ENCODE measurements at regions of chr7 and their contacts with region 1.

Region 1: GRCh38 chr7:123748734-123749536 is at the start of gene WASL:
- DNase-seq: peak; percentile 87 to 91 (median 88)
- H3K4me3 ChIP-seq: peak within 1 kb of the TSS; percentile 68 to 85
- H3K4me3 Mint-ChIP-seq: peak within 1 kb of the TSS; percentile 91 to 98 (median 94)
- H3K27ac ChIP-seq: peak within 1 kb of the TSS; percentile 84
- H3K27ac Mint-ChIP-seq: peak within 1 kb of the TSS; percentile 94 to 97 (median 96)
- H3K4me1 ChIP-seq: peaks cover 52% of the 10 kb centered on the region
- H3K4me1 Mint-ChIP-seq: peaks cover 41 to 56% (median 51%) of the 10 kb centered on the region in 4 donors
- H3K27me3 ChIP-seq: no peaks in the 10 kb centered on the region
- H3K27me3 Mint-ChIP-seq: no peaks in the 10 kb centered on the region
- total RNA-seq, gene WASL: 12.7 to 13.5 TPM

Region 2: GRCh38 chr7:123534383-123535260 is 214.3 kb before region 1 on chr7 and contains the start of gene IQUB:
- CTCF ChIA-PET with region 1: interaction called, 3 read pairs
- POLR2A ChIA-PET with region 1: interaction called, 16 read pairs
- intact Hi-C with region 1: loop called (anchors 2 kb)
- DNase-seq: peak; percentile 89 to 93 (median 91)
- H3K4me3 ChIP-seq: peak within 1 kb of the TSS; percentile 73 to 79
- H3K4me3 Mint-ChIP-seq: peak within 1 kb of the TSS; percentile 73 to 95 (median 90)
- H3K27ac ChIP-seq: peak within 1 kb of the TSS; percentile 60
- H3K27ac Mint-ChIP-seq: peak within 1 kb of the TSS; percentile 72 to 96 (median 91)
- H3K4me1 ChIP-seq: peaks cover 26% of the 10 kb centered on the region
- H3K4me1 Mint-ChIP-seq: peaks cover 11 to 29% (median 25%) of the 10 kb centered on the region in 4 donors
- H3K27me3 ChIP-seq: peaks cover 6% of the 10 kb centered on the region
- H3K27me3 Mint-ChIP-seq: peaks cover 6 to 10% of the 10 kb centered on the region in 2 donors
- total RNA-seq, gene IQUB: 0.14 to 0.49 TPM

Region 3: GRCh38 chr7:123557398-123558288 is 191.3 kb before region 1 on chr7 and contains the start of gene NDUFA5:
- CTCF ChIA-PET with region 1: interaction called, 8 read pairs
- POLR2A ChIA-PET with region 1: interaction called, 37 read pairs
- intact Hi-C with region 1: loop called (anchors 1 kb)
- DNase-seq: peak; percentile 97 to 99 (median 98)
- H3K4me3 ChIP-seq: peak within 1 kb of the TSS; percentile 61 to 78
- H3K4me3 Mint-ChIP-seq: no peak within 1 kb of the TSS
- H3K27ac ChIP-seq: peak within 1 kb of the TSS; percentile 78
- H3K27ac Mint-ChIP-seq: peak within 1 kb of the TSS in 1 of 7 donors; percentile 45
- H3K4me1 ChIP-seq: peaks cover 43% of the 10 kb centered on the region
- H3K4me1 Mint-ChIP-seq: peaks cover 6 to 17% (median 9%) of the 10 kb centered on the region in 4 donors
- H3K27me3 ChIP-seq: no peaks in the 10 kb centered on the region
- H3K27me3 Mint-ChIP-seq: no peaks in the 10 kb centered on the region
- total RNA-seq, gene NDUFA5: 62.7 to 64.6 TPM

Region 4: DNA sequence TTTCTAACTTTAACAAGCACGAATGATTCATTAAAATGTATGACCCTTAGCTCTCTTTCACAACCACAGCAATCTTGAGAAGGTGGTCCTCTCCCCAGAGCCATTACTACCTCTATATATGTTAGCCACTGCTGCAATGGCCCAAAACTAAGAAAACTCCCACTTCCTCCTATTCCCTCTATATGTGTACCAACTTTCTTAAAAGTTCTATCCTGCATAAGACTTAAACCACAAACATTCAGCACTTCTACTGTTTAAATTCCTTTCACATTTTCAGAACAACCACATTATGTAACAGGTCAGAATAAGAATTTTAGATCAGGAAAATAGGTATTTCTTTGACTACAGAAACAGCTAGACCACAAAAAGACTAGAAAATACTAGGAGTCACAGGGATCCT is 36.3 kb before region 1 on chr7:
- CTCF ChIA-PET with region 1: no interaction called
- POLR2A ChIA-PET with region 1: interaction called, 3 read pairs
- intact Hi-C with region 1: loop called (anchors 5 kb)
- DNase-seq: no peak
- H3K4me3 ChIP-seq: no peak overlapping the region
- H3K4me3 Mint-ChIP-seq: peak overlapping the region in 5 of 8 donors; percentile 0 to 68 (median 29)
- H3K27ac ChIP-seq: no peak overlapping the region
- H3K27ac Mint-ChIP-seq: peak overlapping the region in 3 of 7 donors; percentile 1 to 41 (median 3)
- H3K4me1 ChIP-seq: peaks cover 37% of the 10 kb centered on the region
- H3K4me1 Mint-ChIP-seq: peaks cover 40 to 62% (median 53%) of the 10 kb centered on the region in 4 donors
- H3K27me3 ChIP-seq: no peaks in the 10 kb centered on the region
- H3K27me3 Mint-ChIP-seq: no peaks in the 10 kb centered on the region

Region 5: DNA sequence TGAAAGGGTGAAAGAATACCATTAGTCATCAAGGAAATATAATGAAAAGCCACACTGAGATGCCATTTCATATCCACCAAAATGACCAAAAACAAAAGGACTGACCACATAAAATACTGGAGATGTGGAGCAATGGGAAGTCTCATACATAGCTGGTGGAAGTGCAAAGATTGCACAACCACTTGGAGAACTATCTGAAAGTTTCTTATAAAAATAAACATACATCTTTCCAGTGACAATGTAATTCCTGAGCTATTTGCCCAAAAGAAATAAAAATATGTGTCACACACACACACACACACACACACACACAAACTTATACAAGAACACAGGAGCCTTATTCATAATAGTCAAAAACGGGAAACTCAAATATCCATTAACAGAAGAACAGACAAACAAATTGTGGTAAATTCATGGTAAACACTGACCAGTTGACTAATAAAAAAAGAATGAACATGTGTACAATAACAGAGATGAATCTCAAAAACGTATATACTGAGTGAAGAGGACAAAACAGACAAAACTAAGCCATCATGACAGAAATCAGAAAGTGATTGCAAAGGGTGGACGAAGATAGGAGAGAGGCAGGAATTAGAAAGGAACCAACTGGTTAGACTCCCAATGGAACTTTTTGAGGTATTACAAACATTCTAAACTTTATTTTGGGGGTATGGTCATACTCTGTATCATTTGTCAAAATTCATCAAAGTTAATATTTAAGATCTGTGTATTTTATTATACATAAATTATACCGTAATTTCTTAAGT is 21.7 kb before region 1 on chr7:
- CTCF ChIA-PET with region 1: interaction called, 3 read pairs
- POLR2A ChIA-PET with region 1: interaction called, 4 read pairs
- intact Hi-C with region 1: loop called (anchors 2 kb)
- DNase-seq: no peak
- H3K4me3 ChIP-seq: no peak overlapping the region
- H3K4me3 Mint-ChIP-seq: peak overlapping the region in 4 of 8 donors; percentile 0 to 37 (median 10)
- H3K27ac ChIP-seq: no peak overlapping the region
- H3K27ac Mint-ChIP-seq: peak overlapping the region in 1 of 7 donors; percentile 47
- H3K4me1 ChIP-seq: peaks cover 31% of the 10 kb centered on the region
- H3K4me1 Mint-ChIP-seq: peaks cover 37 to 61% (median 43%) of the 10 kb centered on the region in 4 donors
- H3K27me3 ChIP-seq: no peaks in the 10 kb centered on the region
- H3K27me3 Mint-ChIP-seq: no peaks in the 10 kb centered on the region

Region 6: GRCh38 chr7:123784263-123784662 is 35.3 kb after region 1 on chr7:
- CTCF ChIA-PET with region 1: no interaction called
- POLR2A ChIA-PET with region 1: no interaction called
- intact Hi-C with region 1: no loop called
- DNase-seq: no peak
- H3K4me3 ChIP-seq: no peak overlapping the region
- H3K4me3 Mint-ChIP-seq: no peak overlapping the region
- H3K27ac ChIP-seq: no peak overlapping the region
- H3K27ac Mint-ChIP-seq: no peak overlapping the region
- H3K4me1 ChIP-seq: no peaks in the 10 kb centered on the region
- H3K4me1 Mint-ChIP-seq: no peaks in the 10 kb centered on the region
- H3K27me3 ChIP-seq: no peaks in the 10 kb centered on the region
- H3K27me3 Mint-ChIP-seq: peaks cover 1 to 8% of the 10 kb centered on the region in 2 donors

Region 7: GRCh38 chr7:124929467-124930172 is 1180.7 kb after region 1 on chr7 and contains the start of gene POT1:
- CTCF ChIA-PET with region 1: no interaction called
- POLR2A ChIA-PET with region 1: interaction called, 10 read pairs
- intact Hi-C with region 1: loop called (anchors 5 kb)
- DNase-seq: peak; percentile 92 to 97 (median 95)
- H3K4me3 ChIP-seq: peak within 1 kb of the TSS; percentile 77 to 91
- H3K4me3 Mint-ChIP-seq: peak within 1 kb of the TSS; percentile 90 to 99 (median 96)
- H3K27ac ChIP-seq: peak within 1 kb of the TSS; percentile 77
- H3K27ac Mint-ChIP-seq: peak within 1 kb of the TSS; percentile 89 to 99 (median 98)
- H3K4me1 ChIP-seq: peaks cover 18% of the 10 kb centered on the region
- H3K4me1 Mint-ChIP-seq: peaks cover 27 to 52% (median 41%) of the 10 kb centered on the region in 4 donors
- H3K27me3 ChIP-seq: no peaks in the 10 kb centered on the region
- H3K27me3 Mint-ChIP-seq: no peaks in the 10 kb centered on the region
- total RNA-seq, gene POT1: 23.5 to 24.1 TPM

Measured in CD4-positive, alpha-beta memory T cell (primary cell).